Stomach (tissue), 19 donors: ENCODE measurements at regions of chr7 and their contacts with region 1.

Region 1: GRCh38 chr7:111763221-111763801 is 201.0 kb upstream of the IMMP2L start:
- DNase-seq: peak in 1 of 2 donors; percentile 71
- H3K4me3 ChIP-seq: no peak overlapping the region
- H3K27ac ChIP-seq: no peak overlapping the region
- H3K4me1 ChIP-seq: no peaks in the 10 kb centered on the region
- H3K27me3 ChIP-seq: no peaks in the 10 kb centered on the region
- CTCF ChIP-seq: peak in 5 of 7 experiments; percentile 5 to 53 (median 37)
- EP300 ChIP-seq: no peak
- POLR2A ChIP-seq: no peak

Region 2: GRCh38 chr7:111682588-111683340 is 80.5 kb before region 1 on chr7:
- intact Hi-C with region 1: no loop called
- DNase-seq: no peak
- H3K4me3 ChIP-seq: no peak overlapping the region
- H3K27ac ChIP-seq: no peak overlapping the region
- H3K4me1 ChIP-seq: no peaks in the 10 kb centered on the region
- H3K27me3 ChIP-seq: no peaks in the 10 kb centered on the region
- CTCF ChIP-seq: no peak
- EP300 ChIP-seq: no peak
- POLR2A ChIP-seq: no peak

Region 3: DNA sequence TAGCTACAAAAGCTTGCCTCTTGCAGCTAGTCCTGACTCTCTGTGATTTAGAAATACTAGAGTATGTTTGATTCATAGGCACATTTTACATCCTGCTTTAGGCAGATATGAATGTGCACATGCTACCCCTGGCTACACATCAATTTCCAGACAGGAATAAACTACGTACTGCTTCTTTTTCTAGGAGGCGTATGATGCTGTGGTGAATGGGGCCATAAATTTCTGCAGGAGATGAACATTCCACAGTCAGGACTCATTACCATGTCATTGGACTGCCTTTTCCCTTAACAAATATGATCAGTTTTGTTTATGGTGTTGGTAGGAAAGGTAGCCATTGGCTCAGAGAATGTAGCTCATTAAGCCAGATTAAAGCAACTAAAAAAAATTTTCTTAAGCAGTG is 636.8 kb after region 1 on chr7:
- intact Hi-C with region 1: loop called (anchors 10 kb)
- DNase-seq: no peak
- H3K4me3 ChIP-seq: no peak overlapping the region
- H3K27ac ChIP-seq: no peak overlapping the region
- H3K4me1 ChIP-seq: no peaks in the 10 kb centered on the region
- H3K27me3 ChIP-seq: no peaks in the 10 kb centered on the region
- CTCF ChIP-seq: no peak
- EP300 ChIP-seq: no peak
- POLR2A ChIP-seq: no peak